Activated CD4-positive, alpha-beta T cell treated with anti-CD3 and anti-CD28 coated beads for 36 hours (primary cell): ENCODE measurements at regions of chr11 and their contacts with region 1.

Region 1: DNA sequence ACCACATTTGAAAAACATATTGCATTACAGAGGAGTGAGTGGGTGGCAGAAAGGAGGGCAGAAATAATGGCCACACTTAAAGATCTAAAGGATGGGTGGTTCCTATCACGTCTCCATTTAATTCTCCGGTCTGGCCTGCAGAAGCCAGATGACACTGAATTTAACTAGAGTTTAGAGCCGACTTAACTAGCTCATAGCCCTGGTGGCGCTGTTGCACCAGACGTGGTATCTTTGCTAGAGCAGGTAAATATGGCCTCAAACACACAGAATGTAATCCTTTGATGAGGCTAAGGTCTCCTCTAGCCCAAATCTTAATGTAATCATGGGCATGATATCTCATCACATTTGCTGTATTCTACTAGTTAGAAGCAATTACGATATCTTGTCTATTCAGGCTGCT is 51.5 kb upstream of the GAL start:
- DNase-seq: peak; percentile 73
- ATAC-seq: peak; percentile 71
- H3K4me3 Mint-ChIP-seq: no peak overlapping the region
- H3K27ac Mint-ChIP-seq: no peak overlapping the region
- H3K4me1 Mint-ChIP-seq: no peaks in the 10 kb centered on the region
- H3K27me3 Mint-ChIP-seq: peaks cover 4% of the 10 kb centered on the region

Region 2: DNA sequence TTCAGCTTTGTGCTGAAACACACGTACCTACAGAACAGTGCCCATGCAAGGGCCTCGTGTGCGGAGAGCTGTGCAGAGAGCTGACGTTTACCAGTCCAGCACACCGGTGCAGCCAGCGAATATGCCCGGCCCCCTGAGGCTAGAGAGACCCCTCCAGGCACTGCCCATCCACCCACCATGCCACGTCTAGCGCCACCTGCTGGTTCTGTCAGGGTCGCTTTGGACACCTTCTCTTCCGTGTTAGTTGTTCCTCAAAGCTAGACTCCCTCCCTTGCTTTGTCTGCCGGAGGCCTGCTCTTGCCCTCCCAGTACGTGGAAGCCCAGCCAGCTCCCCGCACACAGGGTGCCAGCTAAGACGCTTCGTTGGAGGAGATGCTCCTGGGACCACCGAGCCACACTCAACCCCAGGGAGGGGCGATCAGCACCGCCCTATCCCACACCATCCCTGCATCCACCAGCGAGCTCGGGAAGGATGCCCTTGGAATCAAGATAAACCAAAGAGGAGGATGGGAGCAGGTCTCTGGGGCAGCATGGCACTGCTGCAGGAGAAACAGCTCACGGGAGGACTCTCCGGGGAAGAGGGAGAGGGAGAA is 165.5 kb after region 1 on chr11:
- CTCF ChIA-PET with region 1: interaction called, 4 read pairs
- POLR2A ChIA-PET with region 1: no interaction called
- intact Hi-C with region 1: loop called in 1 of 2 experiments (anchors 2 kb)
- DNase-seq: peak; percentile 74
- ATAC-seq: no peak
- H3K4me3 Mint-ChIP-seq: no peak overlapping the region
- H3K27ac Mint-ChIP-seq: no peak overlapping the region
- H3K4me1 Mint-ChIP-seq: no peaks in the 10 kb centered on the region
- H3K27me3 Mint-ChIP-seq: no peaks in the 10 kb centered on the region

Region 3: DNA sequence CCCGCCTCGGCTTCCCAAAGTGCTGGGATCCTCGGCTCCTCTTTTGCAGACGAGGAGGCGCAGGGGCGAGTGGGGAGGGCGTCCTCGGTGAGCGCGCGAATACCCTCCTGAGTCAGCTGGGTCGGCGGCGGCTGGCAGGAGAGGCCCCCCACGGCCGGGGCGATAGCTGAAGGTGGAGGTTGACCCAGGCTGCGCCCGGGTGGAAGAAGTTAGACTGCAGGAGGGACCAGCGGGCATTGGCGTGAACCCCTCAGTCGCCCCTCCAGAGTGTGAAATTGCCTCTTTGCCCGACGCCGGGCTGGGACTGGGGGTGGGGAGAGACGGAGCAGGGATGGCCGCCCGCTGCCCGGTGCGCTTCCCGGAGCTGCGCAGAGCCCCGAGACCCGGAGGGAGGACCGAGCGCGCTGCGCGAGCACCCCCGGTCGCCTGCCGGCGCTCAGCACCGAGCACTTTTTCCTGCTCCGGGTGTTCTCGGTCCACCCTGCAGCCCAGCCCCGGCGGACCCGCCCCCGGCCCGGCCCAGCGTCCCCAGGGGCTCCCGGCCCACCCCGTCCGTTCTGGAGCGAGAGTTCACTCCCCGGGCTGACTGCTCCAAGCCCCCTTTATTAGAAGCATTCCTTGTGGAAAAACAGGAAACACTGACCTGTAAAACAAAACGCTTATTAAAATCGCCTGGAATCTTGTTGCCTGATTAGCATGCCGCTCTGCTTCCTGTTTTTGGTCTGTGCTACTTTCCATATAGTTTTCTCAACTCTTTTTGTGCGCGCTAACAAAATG is 222.6 kb after region 1 on chr11:
- CTCF ChIA-PET with region 1: no interaction called
- POLR2A ChIA-PET with region 1: no interaction called
- intact Hi-C with region 1: loop called in 1 of 2 experiments (anchors 10 kb)
- DNase-seq: peak; percentile 51
- ATAC-seq: peak; percentile 77
- H3K4me3 Mint-ChIP-seq: peak overlapping the region; percentile 32
- H3K27ac Mint-ChIP-seq: no peak overlapping the region
- H3K4me1 Mint-ChIP-seq: peaks cover 4% of the 10 kb centered on the region
- H3K27me3 Mint-ChIP-seq: peaks cover 18% of the 10 kb centered on the region

Region 4: DNA sequence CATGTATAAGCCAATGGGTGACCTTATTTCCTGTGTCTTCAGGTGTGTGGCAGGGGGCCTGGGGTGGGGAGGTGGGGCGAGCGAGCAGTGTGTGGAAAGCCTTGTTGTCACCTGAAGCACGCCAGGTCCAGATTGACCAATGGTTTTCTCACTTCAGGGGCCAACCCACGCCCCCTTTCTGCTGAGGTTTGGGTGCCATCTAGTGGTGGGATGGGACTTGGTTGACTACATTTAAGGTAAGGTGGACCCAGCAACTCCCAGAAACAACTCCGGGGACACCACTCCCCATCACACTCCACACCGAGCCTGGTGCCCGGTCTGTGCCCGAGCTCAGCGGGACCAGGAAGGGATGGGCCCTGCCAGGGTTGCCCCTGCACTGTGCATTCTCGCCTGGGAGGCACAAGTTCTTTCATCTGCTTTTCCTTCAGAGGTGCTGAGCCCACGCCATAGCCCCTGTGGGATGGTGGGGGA is 455.9 kb after region 1 on chr11:
- CTCF ChIA-PET with region 1: no interaction called
- POLR2A ChIA-PET with region 1: no interaction called
- intact Hi-C with region 1: loop called in 1 of 2 experiments (anchors 2 kb)
- DNase-seq: peak; percentile 78
- ATAC-seq: peak; percentile 63
- H3K4me3 Mint-ChIP-seq: no peak overlapping the region
- H3K27ac Mint-ChIP-seq: no peak overlapping the region
- H3K4me1 Mint-ChIP-seq: no peaks in the 10 kb centered on the region
- H3K27me3 Mint-ChIP-seq: no peaks in the 10 kb centered on the region